Activated naive CD4-positive, alpha-beta T cell treated with anti-CD3 and anti-CD28 coated beads for 36 hours (primary cell): ENCODE measurements at regions of chr12 and their contacts with region 1.

Region 1: DNA sequence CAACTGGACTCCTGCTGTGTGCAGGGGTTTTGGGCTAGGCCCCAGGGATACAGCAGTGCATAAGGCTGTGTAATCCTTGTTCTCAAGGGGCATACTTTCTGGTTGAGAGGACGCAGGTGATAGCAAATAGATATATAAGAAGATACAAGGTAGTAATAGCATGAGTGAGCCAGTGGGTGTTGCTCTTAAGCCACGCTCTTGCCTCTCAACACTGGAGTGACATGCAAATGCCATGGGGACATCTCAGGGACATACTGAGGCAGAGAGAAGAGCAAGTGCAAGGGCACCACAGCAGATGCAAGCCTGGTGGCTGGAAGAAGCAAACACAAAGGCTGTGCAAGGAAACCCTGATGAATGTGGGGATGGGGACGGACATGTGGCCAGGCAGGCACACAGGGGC is 223.3 kb downstream of the CHST11 start:
- DNase-seq: peak; percentile 70
- H3K4me3 Mint-ChIP-seq: no peak overlapping the region
- H3K27ac Mint-ChIP-seq: peak overlapping the region; percentile 25
- H3K4me1 Mint-ChIP-seq: peaks cover 44% of the 10 kb centered on the region
- H3K27me3 Mint-ChIP-seq: no peaks in the 10 kb centered on the region

Region 2: GRCh38 chr12:104137913-104138796 is 541.9 kb before region 1 on chr12 and contains the start of gene NFYB:
- CTCF ChIA-PET with region 1: no interaction called
- intact Hi-C with region 1: loop called (anchors 5 kb)
- DNase-seq: peak; percentile 95
- H3K4me3 Mint-ChIP-seq: peak within 1 kb of the TSS; percentile 84
- H3K27ac Mint-ChIP-seq: peak within 1 kb of the TSS; percentile 84
- H3K4me1 Mint-ChIP-seq: peaks cover 14% of the 10 kb centered on the region
- H3K27me3 Mint-ChIP-seq: no peaks in the 10 kb centered on the region
- total RNA-seq, gene NFYB: 23.3 to 28.3 TPM

Region 3: DNA sequence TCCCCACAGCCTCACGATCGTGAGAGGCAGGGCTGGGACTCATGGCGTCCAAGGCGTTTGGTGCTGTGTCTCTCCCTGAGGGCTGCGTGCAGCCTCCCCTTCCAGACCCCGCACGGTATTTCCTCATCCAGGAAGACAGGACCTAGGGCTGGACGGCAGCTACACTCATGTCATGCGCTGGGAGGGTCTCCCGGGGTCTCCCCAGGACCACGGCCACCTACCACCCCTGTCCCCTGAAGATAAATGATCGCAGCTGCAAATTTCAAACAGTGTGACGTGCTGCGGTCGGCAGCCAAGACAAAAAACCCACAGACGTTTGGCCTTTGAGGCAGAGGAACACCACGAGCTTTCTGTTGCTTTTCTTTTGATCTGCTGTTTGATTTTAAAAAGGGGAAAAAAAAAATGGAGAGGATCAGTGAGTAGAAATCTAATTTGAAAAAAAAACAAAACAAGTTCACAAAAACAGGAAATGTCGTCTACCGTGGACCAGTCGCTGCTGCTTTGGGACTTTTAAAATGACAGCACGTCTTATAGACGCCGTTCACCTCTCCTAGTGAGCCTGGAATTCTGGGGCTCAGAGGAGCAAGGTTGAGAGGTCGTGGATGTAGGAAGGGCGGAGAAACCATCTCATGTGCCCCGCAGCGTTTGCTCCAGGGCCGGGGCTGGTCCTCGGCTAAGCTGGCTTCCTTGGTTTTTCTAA is 40.4 kb after region 1 on chr12:
- CTCF ChIA-PET with region 1: no interaction called
- intact Hi-C with region 1: loop called (anchors 1 kb)
- DNase-seq: peak; percentile 81
- H3K4me3 Mint-ChIP-seq: peak overlapping the region; percentile 70
- H3K27ac Mint-ChIP-seq: peak overlapping the region; percentile 79
- H3K4me1 Mint-ChIP-seq: peaks cover 35% of the 10 kb centered on the region
- H3K27me3 Mint-ChIP-seq: no peaks in the 10 kb centered on the region

Region 4: GRCh38 chr12:104751594-104751993 is 71.5 kb after region 1 on chr12:
- CTCF ChIA-PET with region 1: no interaction called
- intact Hi-C with region 1: no loop called
- DNase-seq: no peak
- H3K4me3 Mint-ChIP-seq: no peak overlapping the region
- H3K27ac Mint-ChIP-seq: no peak overlapping the region
- H3K4me1 Mint-ChIP-seq: peaks cover 37% of the 10 kb centered on the region
- H3K27me3 Mint-ChIP-seq: no peaks in the 10 kb centered on the region

Region 5: DNA sequence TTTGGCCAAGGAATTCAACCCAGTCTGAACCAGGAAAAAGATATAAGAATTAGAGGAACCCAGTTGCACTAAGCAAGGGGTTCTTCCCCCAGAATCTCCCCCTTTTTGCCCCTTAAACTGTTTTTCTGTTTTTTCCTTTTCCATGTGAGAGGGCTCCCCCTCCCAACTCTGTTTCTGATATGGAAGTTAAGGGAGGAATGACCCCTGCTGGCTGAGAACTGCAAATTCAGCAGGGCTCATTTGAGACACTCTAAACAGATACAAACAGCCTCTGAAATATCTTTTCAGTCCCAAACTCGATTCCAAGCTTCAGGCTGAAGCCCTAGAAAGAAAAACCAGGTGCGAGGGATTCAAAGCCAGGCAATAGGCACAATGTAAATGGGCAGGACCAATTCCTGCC is 145.3 kb after region 1 on chr12:
- CTCF ChIA-PET with region 1: no interaction called
- intact Hi-C with region 1: loop called (anchors 1 kb)
- DNase-seq: peak; percentile 32
- H3K4me3 Mint-ChIP-seq: no peak overlapping the region
- H3K27ac Mint-ChIP-seq: no peak overlapping the region
- H3K4me1 Mint-ChIP-seq: peaks cover 6% of the 10 kb centered on the region
- H3K27me3 Mint-ChIP-seq: no peaks in the 10 kb centered on the region

Region 6: GRCh38 chr12:105030820-105031807 is 351.0 kb after region 1 on chr12:
- CTCF ChIA-PET with region 1: no interaction called
- intact Hi-C with region 1: loop called (anchors 5 kb)
- DNase-seq: no peak
- H3K4me3 Mint-ChIP-seq: no peak overlapping the region
- H3K27ac Mint-ChIP-seq: no peak overlapping the region
- H3K4me1 Mint-ChIP-seq: peaks cover 32% of the 10 kb centered on the region
- H3K27me3 Mint-ChIP-seq: no peaks in the 10 kb centered on the region

Region 7: GRCh38 chr12:105382771-105383622 is 702.9 kb after region 1 on chr12:
- CTCF ChIA-PET with region 1: no interaction called
- intact Hi-C with region 1: loop called (anchors 1 kb)
- DNase-seq: peak; percentile 31
- H3K4me3 Mint-ChIP-seq: no peak overlapping the region
- H3K27ac Mint-ChIP-seq: no peak overlapping the region
- H3K4me1 Mint-ChIP-seq: no peaks in the 10 kb centered on the region
- H3K27me3 Mint-ChIP-seq: no peaks in the 10 kb centered on the region